ENCODE measurements at regions of chr5 and their contacts with region 1.

Region 1: GRCh38 chr5:112154940-112155686 is 264.0 kb downstream of the EPB41L4A start:
- DNase-seq: no peak
- ATAC-seq: peak; percentile 34
- H3K4me3 ChIP-seq: no peak overlapping the region
- H3K27ac ChIP-seq: no peak overlapping the region
- H3K4me1 ChIP-seq: no peaks in the 10 kb centered on the region
- H3K27me3 ChIP-seq: no peaks in the 10 kb centered on the region
- CTCF ChIP-seq: no peak
- EP300 ChIP-seq: no peak
- POLR2A ChIP-seq: no peak
- RAD21 ChIP-seq: no peak

Region 2: DNA sequence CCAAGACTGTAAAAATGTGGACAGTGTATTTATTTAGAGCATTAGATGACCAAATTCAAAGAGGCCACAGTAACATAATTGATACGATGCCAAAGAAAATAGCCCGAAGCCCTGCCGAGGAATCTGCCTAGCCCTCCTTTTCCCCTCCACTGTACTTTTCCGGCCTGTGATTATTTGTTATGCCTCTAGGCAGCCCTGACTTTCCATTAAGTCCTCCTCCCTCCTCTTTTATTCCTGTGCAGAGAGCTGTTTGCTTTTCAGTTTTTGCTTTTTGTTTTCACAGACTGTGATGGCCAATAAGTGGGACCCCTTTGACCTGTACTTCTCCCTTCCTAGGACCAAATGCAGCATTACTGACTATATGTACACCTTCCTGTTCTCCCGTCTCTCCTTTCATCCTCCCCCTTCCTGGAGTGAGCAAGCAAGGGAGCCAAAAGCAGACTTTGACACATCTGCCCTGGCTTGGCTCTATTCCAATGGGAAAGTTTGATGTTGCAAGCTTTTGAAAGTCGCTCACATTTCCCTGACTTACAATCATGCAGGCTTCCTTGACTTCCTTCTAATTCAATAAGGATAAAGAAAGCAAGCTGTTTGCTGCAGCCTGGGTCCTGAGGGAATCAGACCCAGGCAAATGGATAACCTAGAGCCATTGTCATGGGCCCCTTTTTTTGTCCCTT is 474.2 kb before region 1 on chr5:
- CTCF ChIA-PET with region 1: no interaction called
- POLR2A ChIA-PET with region 1: no interaction called
- RAD21 ChIA-PET with region 1: no interaction called
- SMC1A ChIA-PET with region 1: no interaction called
- in situ Hi-C with region 1: loop called (anchors 5 kb)
- intact Hi-C with region 1: no loop called
- DNase-seq: no peak
- ATAC-seq: no peak
- H3K4me3 ChIP-seq: no peak overlapping the region
- H3K27ac ChIP-seq: no peak overlapping the region
- H3K4me1 ChIP-seq: no peaks in the 10 kb centered on the region
- H3K27me3 ChIP-seq: no peaks in the 10 kb centered on the region; a peak in 1 of 4 replicates
- CTCF ChIP-seq: no peak
- EP300 ChIP-seq: no peak
- POLR2A ChIP-seq: no peak
- RAD21 ChIP-seq: no peak

Region 3: GRCh38 chr5:113264042-113264441 is 1108.9 kb after region 1 on chr5:
- CTCF ChIA-PET with region 1: no interaction called
- POLR2A ChIA-PET with region 1: no interaction called
- RAD21 ChIA-PET with region 1: no interaction called
- SMC1A ChIA-PET with region 1: no interaction called
- in situ Hi-C with region 1: no loop called
- intact Hi-C with region 1: no loop called
- DNase-seq: no peak
- ATAC-seq: no peak
- H3K4me3 ChIP-seq: no peak overlapping the region
- H3K27ac ChIP-seq: no peak overlapping the region
- H3K4me1 ChIP-seq: no peaks in the 10 kb centered on the region
- H3K27me3 ChIP-seq: no peaks in the 10 kb centered on the region; a peak in 2 of 4 replicates
- CTCF ChIP-seq: no peak
- EP300 ChIP-seq: no peak
- POLR2A ChIP-seq: no peak
- RAD21 ChIP-seq: no peak